Activated naive CD4-positive, alpha-beta T cell treated with anti-CD3 and anti-CD28 coated beads for 36 hours (primary cell): ENCODE measurements at regions of chr17 and their contacts with region 1.

Region 1: DNA sequence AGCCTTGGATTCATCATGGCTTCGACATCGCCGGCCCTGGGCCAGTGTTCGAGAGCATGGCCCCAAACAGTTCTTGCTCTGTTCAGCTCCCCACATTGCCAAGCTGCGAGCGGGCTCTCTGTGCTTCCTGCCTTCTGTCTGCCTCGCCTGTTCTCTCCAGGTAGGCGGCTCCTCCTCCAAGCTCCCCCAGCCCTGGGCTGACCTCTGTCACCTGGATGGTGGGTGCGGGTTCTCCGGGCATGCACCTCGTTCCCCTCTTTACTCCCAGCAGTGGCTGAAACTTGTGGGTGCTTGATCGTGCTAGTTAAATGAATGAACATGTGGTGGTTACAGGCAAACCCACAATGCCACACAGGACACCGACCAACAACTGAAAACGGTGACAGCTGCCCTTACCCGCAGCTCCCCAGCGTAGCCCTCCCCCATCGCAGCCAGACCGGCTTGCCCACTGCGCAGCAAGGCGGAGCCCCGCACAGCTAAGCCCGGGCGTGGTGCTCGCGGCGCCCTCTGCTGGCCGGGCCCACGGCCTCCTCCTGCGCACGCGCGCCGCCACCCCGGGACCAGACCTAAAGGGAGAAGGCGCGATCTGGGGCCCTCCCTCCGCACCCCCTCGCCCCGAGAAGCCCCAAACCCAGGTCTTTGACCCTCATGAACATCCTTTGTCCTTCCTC is 23.0 kb upstream of the EIF1 start:
- DNase-seq: peak; percentile 91
- H3K4me3 Mint-ChIP-seq: peak overlapping the region; percentile 90
- H3K27ac Mint-ChIP-seq: peak overlapping the region; percentile 98
- H3K4me1 Mint-ChIP-seq: peaks cover 39% of the 10 kb centered on the region
- H3K27me3 Mint-ChIP-seq: no peaks in the 10 kb centered on the region

Region 2: DNA sequence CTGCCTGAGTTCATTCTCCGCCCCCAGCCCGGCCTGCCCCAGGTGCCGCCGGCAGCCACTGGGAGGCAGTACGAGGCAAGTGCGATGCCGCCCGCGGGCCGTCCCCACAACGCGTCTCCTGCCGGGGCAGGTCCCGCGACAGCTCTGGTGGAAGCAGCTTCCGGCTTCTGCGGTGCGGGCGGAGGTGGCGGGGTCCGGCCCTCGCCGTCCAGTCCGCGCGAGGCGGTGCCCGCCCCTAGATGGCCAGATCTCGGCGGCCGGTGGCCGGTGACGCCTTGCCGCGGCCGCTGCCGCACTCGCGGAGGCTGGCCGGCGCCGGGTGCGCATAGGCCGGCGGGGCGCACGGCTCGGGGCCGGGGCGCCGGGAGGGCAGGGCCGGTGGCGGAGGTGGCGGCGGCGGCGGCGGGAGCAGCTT is 1303.0 kb before region 1 on chr17:
- CTCF ChIA-PET with region 1: interaction called, 3 read pairs
- intact Hi-C with region 1: loop called (anchors 5 kb)
- DNase-seq: peak; percentile 95
- H3K4me3 Mint-ChIP-seq: peak overlapping the region; percentile 76
- H3K27ac Mint-ChIP-seq: no peak overlapping the region
- H3K4me1 Mint-ChIP-seq: peaks cover 12% of the 10 kb centered on the region
- H3K27me3 Mint-ChIP-seq: peaks cover 12% of the 10 kb centered on the region

Region 3: DNA sequence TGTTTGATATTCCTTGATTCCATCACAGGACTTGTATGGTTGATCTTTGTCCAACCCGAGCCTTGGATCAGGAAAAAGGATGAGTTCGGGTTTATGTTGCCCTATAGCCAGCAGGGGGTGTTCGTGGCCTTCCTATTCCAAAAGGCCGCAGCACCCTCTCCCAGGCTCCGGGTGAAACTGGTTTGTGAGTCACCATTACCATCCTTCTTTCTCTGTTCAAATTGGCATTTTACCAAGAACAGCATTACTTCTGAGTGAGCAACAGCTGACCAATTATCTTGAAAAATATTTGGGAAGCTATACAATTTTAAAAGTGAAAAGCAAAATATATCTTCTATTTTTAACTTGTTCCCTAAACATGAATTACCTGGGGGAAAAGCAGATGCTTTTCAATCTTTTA is 756.4 kb before region 1 on chr17:
- CTCF ChIA-PET with region 1: interaction called, 10 read pairs
- intact Hi-C with region 1: loop called (anchors 2 kb)
- DNase-seq: peak; percentile 74
- H3K4me3 Mint-ChIP-seq: no peak overlapping the region
- H3K27ac Mint-ChIP-seq: no peak overlapping the region
- H3K4me1 Mint-ChIP-seq: no peaks in the 10 kb centered on the region
- H3K27me3 Mint-ChIP-seq: peaks cover 20% of the 10 kb centered on the region

Region 4: GRCh38 chr17:41486809-41487720 is 178.6 kb before region 1 on chr17:
- CTCF ChIA-PET with region 1: interaction called, 6 read pairs
- intact Hi-C with region 1: loop called (anchors 5 kb)
- DNase-seq: peak; percentile 53
- H3K4me3 Mint-ChIP-seq: no peak overlapping the region
- H3K27ac Mint-ChIP-seq: no peak overlapping the region
- H3K4me1 Mint-ChIP-seq: peaks cover 6% of the 10 kb centered on the region
- H3K27me3 Mint-ChIP-seq: peaks cover 2% of the 10 kb centered on the region

Region 5: DNA sequence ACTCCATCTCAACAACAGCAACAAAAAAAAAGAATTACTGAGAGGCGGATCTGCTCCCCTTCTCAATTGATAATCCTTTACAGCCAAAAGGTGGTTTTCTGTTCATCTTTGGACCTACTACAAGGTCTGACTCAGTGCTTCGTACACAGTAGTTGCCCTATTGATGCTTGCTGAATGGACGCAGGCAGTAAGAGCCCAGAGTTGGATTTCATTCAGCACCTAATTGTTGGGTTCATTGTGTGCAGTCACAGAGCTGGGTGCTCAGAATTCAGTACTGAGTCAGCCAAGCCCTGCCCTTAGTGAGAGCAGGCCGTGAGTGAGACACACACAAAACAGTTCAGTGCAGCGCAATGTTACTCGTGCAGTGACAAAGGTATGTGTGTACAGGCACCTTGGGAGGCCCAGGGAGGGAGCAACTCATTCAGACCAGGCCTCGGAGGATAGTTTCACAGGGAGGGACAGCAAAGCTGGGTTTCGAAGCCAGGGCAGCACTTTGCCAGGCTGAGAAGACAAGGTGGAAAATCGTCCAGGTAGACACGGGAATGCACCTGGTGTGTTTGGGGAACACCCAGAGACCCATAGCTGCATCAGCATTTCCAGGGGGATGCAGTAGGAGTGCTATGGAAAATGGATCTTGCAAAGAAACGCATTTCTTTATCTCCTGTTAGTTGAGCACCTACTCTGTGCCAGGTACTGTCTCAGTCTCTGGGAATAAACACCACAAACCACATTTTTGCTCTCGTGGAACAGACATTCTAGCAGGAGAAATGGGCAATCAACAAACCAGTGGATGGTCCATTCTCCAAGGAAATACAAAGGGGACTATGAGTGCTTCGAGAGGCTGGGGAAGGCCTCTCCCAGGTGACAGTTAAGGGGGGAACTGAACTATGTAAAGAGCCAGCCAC is 23.2 kb before region 1 on chr17:
- CTCF ChIA-PET with region 1: interaction called, 295 read pairs
- intact Hi-C with region 1: no loop called
- DNase-seq: no peak
- H3K4me3 Mint-ChIP-seq: no peak overlapping the region
- H3K27ac Mint-ChIP-seq: no peak overlapping the region
- H3K4me1 Mint-ChIP-seq: no peaks in the 10 kb centered on the region
- H3K27me3 Mint-ChIP-seq: no peaks in the 10 kb centered on the region

Region 6: DNA sequence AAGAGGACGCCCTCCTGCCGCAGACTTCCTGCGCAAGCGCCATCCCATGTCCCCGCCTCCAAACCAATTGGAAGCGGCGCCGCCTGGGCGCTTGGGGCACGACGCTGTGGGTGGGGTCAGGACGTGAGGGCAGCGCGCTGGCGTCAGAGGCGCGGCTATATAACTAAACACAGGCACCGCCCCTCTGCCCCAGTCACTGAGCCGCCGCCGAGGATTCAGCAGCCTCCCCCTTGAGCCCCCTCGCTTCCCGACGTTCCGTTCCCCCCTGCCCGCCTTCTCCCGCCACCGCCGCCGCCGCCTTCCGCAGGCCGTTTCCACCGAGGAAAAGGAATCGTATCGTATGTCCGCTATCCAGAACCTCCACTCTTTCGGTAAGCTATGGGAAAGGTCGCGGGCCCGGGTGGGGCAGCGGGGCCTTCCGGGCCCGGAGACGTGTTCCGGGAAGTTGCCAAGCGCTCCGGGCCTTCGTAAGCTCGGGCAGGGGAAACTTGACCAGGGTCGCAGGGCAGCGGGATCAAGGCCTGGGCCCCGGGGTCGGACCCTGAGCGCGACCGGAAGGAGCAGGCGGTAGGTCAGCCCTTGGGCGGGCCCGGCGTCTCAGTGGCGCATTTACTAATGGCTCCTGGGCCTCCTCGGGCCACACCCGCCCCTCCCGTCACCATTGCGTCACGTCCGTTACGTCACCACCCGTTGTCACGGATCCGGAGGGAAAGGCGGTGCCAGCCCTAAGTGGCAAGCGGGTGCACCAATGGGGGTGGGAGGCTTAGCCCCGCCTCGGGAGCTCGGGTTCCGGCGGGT is 23.2 kb after region 1 on chr17 and contains the start of gene EIF1:
- CTCF ChIA-PET with region 1: interaction called, 27 read pairs
- intact Hi-C with region 1: loop called (anchors 1 kb)
- DNase-seq: peak; percentile 100
- H3K4me3 Mint-ChIP-seq: peak within 1 kb of the TSS; percentile 97
- H3K27ac Mint-ChIP-seq: peak within 1 kb of the TSS; percentile 99
- H3K4me1 Mint-ChIP-seq: peaks cover 26% of the 10 kb centered on the region
- H3K27me3 Mint-ChIP-seq: no peaks in the 10 kb centered on the region
- total RNA-seq, gene EIF1: 1,206 to 1,253 TPM